AG04449 (cell line): ENCODE measurements at regions of chr22 and their contacts with region 1.

Region 1: GRCh38 chr22:28112548-28113043 is 193.5 kb upstream of the PITPNB start:
- DNase-seq: no peak
- H3K4me3 ChIP-seq: no peak overlapping the region
- CTCF ChIP-seq: peak; percentile 47

Region 2: GRCh38 chr22:28123989-28124766 is 11.6 kb after region 1 on chr22:
- CTCF ChIA-PET with region 1: interaction called, 26 read pairs
- POLR2A ChIA-PET with region 1: no interaction called
- DNase-seq: no peak
- H3K4me3 ChIP-seq: no peak overlapping the region
- CTCF ChIP-seq: no peak